Natural killer cell (primary cell): ENCODE measurements at regions of chr10 and their contacts with region 1.

Region 1: DNA sequence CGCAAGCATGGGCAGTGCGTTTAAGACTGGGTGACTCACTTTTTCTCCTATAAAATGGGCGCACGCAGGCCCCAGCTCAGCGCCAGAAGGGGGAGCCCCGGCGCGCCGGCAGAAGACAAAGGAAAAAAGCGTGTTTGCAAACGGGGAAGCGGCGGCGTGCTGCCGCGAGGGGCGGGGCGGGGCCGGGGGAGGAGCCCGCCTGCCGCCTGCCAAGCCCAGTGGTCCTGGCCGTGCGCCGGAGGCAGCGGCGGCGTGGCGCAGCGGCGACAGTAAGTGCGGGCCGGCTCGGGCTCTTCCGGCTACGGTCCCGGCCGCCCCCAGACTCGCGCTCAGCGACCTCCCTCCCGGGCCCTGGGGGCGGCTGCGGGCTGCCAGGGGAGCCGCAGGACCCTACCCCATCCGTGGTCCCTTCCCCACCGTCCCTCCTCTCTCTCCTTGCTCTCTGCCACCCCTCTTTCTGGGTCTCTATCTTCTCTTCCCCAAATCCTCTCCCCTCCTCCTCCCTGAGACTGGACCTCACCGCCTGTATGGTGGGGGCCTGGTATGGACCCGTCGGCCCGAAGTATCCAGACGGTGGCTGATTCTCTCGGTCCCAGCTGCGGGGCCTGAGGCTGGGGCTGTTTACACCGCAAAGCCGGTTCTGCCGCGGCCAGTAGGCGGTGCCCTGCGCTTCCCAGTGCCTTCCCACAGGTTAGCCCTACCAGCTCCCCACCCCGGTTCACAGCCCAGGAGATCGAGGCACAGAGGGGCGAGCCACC is at the start of gene SLC29A3:
- DNase-seq: peak; percentile 73 to 91
- ATAC-seq: peak; percentile 89 to 94 (median 90)
- H3K4me3 ChIP-seq: peak within 1 kb of the TSS; percentile 82
- H3K4me3 Mint-ChIP-seq: peak within 1 kb of the TSS; percentile 92
- H3K27ac ChIP-seq: peak within 1 kb of the TSS; percentile 58
- H3K27ac Mint-ChIP-seq: peak within 1 kb of the TSS; percentile 34 to 91
- H3K4me1 ChIP-seq: peaks cover 25% of the 10 kb centered on the region
- H3K4me1 Mint-ChIP-seq: peaks cover 19 to 34% of the 10 kb centered on the region in 2 donors
- H3K27me3 ChIP-seq: no peaks in the 10 kb centered on the region
- H3K27me3 Mint-ChIP-seq: peaks cover 0 to 6% of the 10 kb centered on the region in 2 donors
- CTCF ChIP-seq: peak; percentile 32
- total RNA-seq, gene SLC29A3: 4.0 to 6.6 (median 5.3) TPM

Region 2: DNA sequence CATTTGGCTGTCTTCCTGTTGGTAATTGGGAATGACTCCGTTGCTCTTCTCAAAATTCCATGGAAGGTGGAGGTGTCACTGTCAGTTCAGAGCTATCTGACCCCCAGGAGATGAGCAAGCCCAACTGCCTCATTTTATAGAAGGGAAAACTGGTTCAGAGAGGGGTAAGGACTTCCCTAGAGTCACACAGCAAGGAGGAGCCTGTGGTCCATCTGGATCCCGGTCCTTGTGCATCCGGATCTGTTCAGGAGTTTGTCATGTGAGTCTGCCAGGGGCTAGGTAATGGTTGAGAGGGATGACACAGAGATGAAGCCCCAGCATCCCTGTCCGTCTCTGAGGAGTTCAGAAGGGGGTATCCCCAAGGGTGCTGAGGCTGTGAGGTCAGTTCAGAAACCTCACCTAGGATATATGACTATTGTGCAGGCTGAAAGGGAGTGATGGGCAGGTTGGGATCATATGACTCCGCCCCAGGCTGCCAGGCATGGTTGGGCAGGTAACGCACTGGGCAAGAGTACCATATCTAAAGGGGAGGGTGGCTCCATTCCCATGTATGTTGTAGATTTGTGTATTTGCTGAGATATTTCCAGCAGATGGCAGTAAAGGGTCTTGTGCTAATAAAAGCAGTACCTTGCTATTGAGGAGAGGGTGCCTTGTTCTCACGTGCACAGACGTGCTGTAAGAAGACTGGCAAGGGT is 16.2 kb before region 1 on chr10:
- intact Hi-C with region 1: no loop called
- DNase-seq: peak in 1 of 2 donors; percentile 66
- ATAC-seq: peak; percentile 43 to 74 (median 68)
- H3K4me3 ChIP-seq: no peak overlapping the region
- H3K4me3 Mint-ChIP-seq: no peak overlapping the region
- H3K27ac ChIP-seq: no peak overlapping the region
- H3K27ac Mint-ChIP-seq: no peak overlapping the region
- H3K4me1 ChIP-seq: peaks cover 8% of the 10 kb centered on the region
- H3K4me1 Mint-ChIP-seq: no peaks in the 10 kb centered on the region
- H3K27me3 ChIP-seq: no peaks in the 10 kb centered on the region
- H3K27me3 Mint-ChIP-seq: peaks cover 7% of the 10 kb centered on the region in 2 donors
- CTCF ChIP-seq: peak; percentile 56

Region 3: DNA sequence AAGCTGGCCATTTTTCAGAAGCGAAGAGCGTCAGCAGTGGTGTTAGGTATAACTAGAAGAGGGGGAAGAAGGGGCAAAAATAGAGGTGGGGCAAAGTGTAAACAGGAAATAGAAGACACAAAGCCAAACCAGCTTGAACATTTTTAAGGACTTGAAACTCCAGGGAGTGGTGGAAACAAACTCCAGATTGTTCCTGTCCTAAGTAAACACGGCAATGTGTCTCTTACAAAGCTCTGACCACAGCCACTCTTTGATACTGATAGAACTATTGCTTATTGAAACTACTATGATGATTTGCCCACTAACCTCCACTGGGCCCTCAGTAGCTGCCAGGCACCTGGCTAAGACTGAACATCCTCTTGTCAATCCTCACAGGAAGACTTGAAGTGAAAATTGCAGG is 56.7 kb after region 1 on chr10:
- intact Hi-C with region 1: loop called (anchors 2 kb)
- DNase-seq: no peak
- ATAC-seq: no peak
- H3K4me3 ChIP-seq: no peak overlapping the region
- H3K4me3 Mint-ChIP-seq: peak overlapping the region; percentile 55
- H3K27ac ChIP-seq: no peak overlapping the region
- H3K27ac Mint-ChIP-seq: peak overlapping the region in 1 of 2 donors; percentile 53
- H3K4me1 ChIP-seq: peaks cover 37% of the 10 kb centered on the region
- H3K4me1 Mint-ChIP-seq: peaks cover 6% of the 10 kb centered on the region in 2 donors
- H3K27me3 ChIP-seq: no peaks in the 10 kb centered on the region
- H3K27me3 Mint-ChIP-seq: peaks cover 2 to 7% of the 10 kb centered on the region in 2 donors
- CTCF ChIP-seq: no peak

Region 4: DNA sequence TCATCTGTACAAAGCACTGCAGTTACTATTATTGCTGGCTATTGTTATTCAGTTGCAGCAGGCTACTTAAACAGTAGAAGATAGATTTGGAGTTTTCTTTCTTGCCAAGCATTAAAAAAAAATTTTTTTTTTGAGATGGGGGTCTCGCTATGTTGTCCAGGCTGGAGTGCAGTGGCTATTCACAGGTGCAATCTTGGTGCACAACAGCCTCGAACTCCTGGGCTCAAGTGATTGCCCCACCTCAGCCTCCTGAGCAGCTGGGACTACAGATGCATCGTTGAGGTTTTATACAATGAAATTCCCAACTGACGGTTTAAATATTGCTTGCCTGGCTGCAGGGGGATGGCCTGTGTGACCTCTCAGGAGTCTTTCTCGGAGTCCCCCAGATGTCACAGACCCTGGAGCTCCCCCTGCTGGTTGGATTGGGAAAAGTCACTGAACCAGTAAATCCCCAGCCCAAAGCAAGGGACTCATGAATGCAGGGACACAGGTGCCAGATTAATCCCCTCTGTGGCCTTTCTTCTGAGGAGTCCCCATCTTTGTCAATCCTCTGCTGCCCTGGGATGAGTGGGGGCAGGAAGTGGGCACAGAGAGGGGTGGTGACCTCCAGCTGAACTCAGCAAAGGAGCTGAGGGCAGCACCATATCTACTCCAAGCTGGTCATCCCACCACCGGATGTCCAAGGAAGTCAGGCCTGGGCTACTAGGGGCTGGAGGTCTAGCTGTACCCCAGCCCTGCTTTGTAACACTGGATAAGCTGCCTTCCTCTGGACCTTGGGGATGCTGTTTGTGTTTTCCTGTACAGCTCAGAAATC is 250.8 kb after region 1 on chr10:
- intact Hi-C with region 1: loop called (anchors 1 kb)
- DNase-seq: peak; percentile 69 to 82
- ATAC-seq: peak; percentile 58 to 75 (median 66)
- H3K4me3 ChIP-seq: no peak overlapping the region
- H3K4me3 Mint-ChIP-seq: no peak overlapping the region
- H3K27ac ChIP-seq: no peak overlapping the region
- H3K27ac Mint-ChIP-seq: no peak overlapping the region
- H3K4me1 ChIP-seq: no peaks in the 10 kb centered on the region
- H3K4me1 Mint-ChIP-seq: no peaks in the 10 kb centered on the region
- H3K27me3 ChIP-seq: no peaks in the 10 kb centered on the region
- H3K27me3 Mint-ChIP-seq: no peaks in the 10 kb centered on the region
- CTCF ChIP-seq: peak; percentile 77

Region 5: GRCh38 chr10:71708301-71708703 is 389.1 kb after region 1 on chr10:
- intact Hi-C with region 1: loop called (anchors 5 kb)
- DNase-seq: peak; percentile 62 to 80
- ATAC-seq: peak; percentile 60 to 93 (median 90)
- H3K4me3 ChIP-seq: no peak overlapping the region
- H3K4me3 Mint-ChIP-seq: no peak overlapping the region
- H3K27ac ChIP-seq: no peak overlapping the region
- H3K27ac Mint-ChIP-seq: no peak overlapping the region
- H3K4me1 ChIP-seq: peaks cover 35% of the 10 kb centered on the region
- H3K4me1 Mint-ChIP-seq: peaks cover 8 to 23% of the 10 kb centered on the region in 2 donors
- H3K27me3 ChIP-seq: no peaks in the 10 kb centered on the region
- H3K27me3 Mint-ChIP-seq: no peaks in the 10 kb centered on the region
- CTCF ChIP-seq: peak; percentile 95